Left ventricle myocardium superior (tissue), 1 donor: ENCODE measurements at regions of chr9 and their contacts with region 1.

Region 1: GRCh38 chr9:32434892-32435291 is 50.4 kb downstream of the ACO1 start:
- DNase-seq: no peak
- ATAC-seq: no peak

Region 2: GRCh38 chr9:32384364-32385151 is 50.3 kb before region 1 on chr9 and contains the start of gene ACO1:
- intact Hi-C with region 1: loop called (anchors 5 kb)
- DNase-seq: peak; percentile 96
- ATAC-seq: peak; percentile 99
- total RNA-seq, gene ACO1: 62.1 TPM

Region 3: GRCh38 chr9:32677931-32678330 is 243.0 kb after region 1 on chr9:
- intact Hi-C with region 1: no loop called
- DNase-seq: no peak
- ATAC-seq: no peak